Activated B cell treated with CpG ODN at 0.5 μM for 24 hours (primary cell): ENCODE measurements at regions of chr14 and their contacts with region 1.

Region 1: GRCh38 chr14:95480109-95480886 is 36.2 kb downstream of the SYNE3 start:
- DNase-seq: no peak
- ATAC-seq: peak; percentile 85
- H3K4me3 Mint-ChIP-seq: peak overlapping the region; percentile 52
- H3K27ac Mint-ChIP-seq: peak overlapping the region; percentile 90
- H3K4me1 Mint-ChIP-seq: peaks cover 53% of the 10 kb centered on the region
- H3K27me3 Mint-ChIP-seq: no peaks in the 10 kb centered on the region
- CTCF ChIP-seq: no peak

Region 2: DNA sequence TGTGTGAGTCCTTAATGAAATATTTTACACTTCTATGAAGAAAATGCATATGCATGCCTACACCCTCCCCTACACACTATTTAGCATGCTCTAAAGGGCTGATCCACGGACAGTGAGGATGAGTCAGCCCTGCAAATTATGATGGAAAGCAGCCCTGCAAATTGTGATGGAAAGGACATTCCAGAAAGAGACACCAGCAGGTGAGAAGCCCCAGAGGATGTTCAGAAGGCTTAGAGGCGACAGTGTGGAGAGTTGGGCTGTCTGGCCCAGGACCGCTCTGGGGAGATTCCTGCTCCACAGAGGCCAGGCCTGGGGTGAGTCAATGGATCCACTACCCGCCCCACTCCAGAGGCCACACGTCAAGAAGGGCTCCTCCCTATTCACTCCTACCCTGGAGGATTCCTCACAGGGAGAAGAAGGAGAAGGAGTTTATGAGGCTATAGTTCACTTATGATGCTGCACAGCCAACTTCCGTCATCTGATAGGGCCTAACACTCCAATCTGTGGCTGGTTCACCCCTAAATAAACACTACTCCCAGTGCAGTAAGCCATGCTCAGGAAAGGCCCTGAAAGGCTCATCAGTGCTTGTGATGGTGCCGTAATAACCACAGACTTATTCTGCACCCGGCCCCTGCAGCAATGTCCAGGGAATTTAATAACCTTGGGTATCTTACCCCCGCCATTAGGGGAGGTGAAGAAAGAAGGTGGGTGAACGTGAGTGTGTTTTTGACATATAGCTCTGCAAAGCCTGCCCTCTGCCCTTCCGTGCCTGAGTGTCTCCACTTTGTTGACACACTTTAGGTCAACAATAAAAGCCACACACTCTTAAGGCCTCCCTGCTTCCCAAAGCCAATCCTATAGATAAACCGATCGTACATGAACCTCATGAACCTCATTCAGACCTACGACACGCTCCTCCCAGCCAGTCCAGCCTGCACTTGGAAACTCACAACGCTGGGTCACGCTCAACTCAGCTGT is 207.0 kb before region 1 on chr14:
- CTCF ChIA-PET with region 1: no interaction called
- POLR2A ChIA-PET with region 1: no interaction called
- intact Hi-C with region 1: no loop called
- DNase-seq: no peak
- ATAC-seq: no peak
- H3K4me3 Mint-ChIP-seq: no peak overlapping the region
- H3K27ac Mint-ChIP-seq: no peak overlapping the region
- H3K4me1 Mint-ChIP-seq: peaks cover 18% of the 10 kb centered on the region
- H3K27me3 Mint-ChIP-seq: no peaks in the 10 kb centered on the region
- CTCF ChIP-seq: no peak

Region 3: GRCh38 chr14:95442633-95443021 is 37.7 kb before region 1 on chr14:
- CTCF ChIA-PET with region 1: interaction called, 7 read pairs
- POLR2A ChIA-PET with region 1: no interaction called
- intact Hi-C with region 1: loop called (anchors 1 kb)
- DNase-seq: peak; percentile 55
- ATAC-seq: peak; percentile 91
- H3K4me3 Mint-ChIP-seq: no peak overlapping the region
- H3K27ac Mint-ChIP-seq: peak overlapping the region; percentile 78
- H3K4me1 Mint-ChIP-seq: peaks cover 34% of the 10 kb centered on the region
- H3K27me3 Mint-ChIP-seq: no peaks in the 10 kb centered on the region
- CTCF ChIP-seq: no peak

Region 4: GRCh38 chr14:95460647-95461478 is 19.4 kb before region 1 on chr14:
- CTCF ChIA-PET with region 1: interaction called, 3 read pairs
- POLR2A ChIA-PET with region 1: interaction called, 3 read pairs
- intact Hi-C with region 1: loop called (anchors 2 kb)
- DNase-seq: no peak
- ATAC-seq: no peak
- H3K4me3 Mint-ChIP-seq: no peak overlapping the region
- H3K27ac Mint-ChIP-seq: no peak overlapping the region
- H3K4me1 Mint-ChIP-seq: peaks cover 65% of the 10 kb centered on the region
- H3K27me3 Mint-ChIP-seq: no peaks in the 10 kb centered on the region
- CTCF ChIP-seq: no peak

Region 5: GRCh38 chr14:95495538-95496025 is 15.3 kb after region 1 on chr14:
- CTCF ChIA-PET with region 1: interaction called, 7 read pairs
- POLR2A ChIA-PET with region 1: interaction called, 11 read pairs
- intact Hi-C with region 1: loop called (anchors 1 kb)
- DNase-seq: peak; percentile 60
- ATAC-seq: peak; percentile 87
- H3K4me3 Mint-ChIP-seq: peak overlapping the region; percentile 62
- H3K27ac Mint-ChIP-seq: peak overlapping the region; percentile 91
- H3K4me1 Mint-ChIP-seq: peaks cover 86% of the 10 kb centered on the region
- H3K27me3 Mint-ChIP-seq: no peaks in the 10 kb centered on the region
- CTCF ChIP-seq: no peak